ENCODE measurements at regions of chr14 and their contacts with region 1.

Region 1: GRCh38 chr14:72516936-72517700 is 376.8 kb downstream of the DPF3 start:
- DNase-seq: no peak
- CTCF ChIP-seq: peak; percentile 97

Region 2: DNA sequence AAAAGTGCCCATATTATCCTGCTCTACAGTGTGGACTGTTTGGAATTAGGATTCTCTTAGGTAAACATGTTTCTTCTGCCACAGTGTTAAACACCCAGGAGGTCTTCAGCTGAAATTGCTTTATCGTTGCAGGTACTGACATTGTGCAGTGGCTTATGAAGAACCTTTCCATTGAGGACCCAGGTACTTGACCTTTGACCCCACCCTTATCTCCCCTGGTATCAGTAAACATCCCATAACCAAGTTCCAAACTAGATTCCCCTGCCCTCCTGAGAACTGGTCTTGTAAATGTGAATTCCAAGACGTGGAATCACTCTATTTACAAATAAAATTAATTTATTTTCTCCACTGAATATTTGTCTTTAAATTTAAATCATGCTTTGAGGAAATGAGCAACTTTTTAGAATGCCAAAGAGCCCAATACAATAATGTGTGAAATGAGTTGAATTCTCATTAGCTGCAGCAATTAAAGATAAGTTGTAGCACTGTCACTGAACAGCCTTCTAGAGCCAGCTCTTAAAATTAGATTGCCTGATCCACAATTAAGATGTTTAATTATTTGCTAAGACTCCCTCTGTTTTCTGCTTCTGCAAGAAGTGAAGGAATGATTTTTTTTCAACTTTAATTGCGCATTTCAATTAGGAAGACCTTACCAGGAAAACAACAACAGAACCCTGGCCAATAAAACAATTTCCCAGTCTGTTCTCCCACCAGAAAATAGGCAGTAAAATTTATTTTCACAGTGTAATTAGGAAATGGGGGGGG is 62.5 kb before region 1 on chr14:
- CTCF ChIA-PET with region 1: interaction called, 11 read pairs
- POLR2A ChIA-PET with region 1: no interaction called
- DNase-seq: no peak
- CTCF ChIP-seq: no peak

Region 3: DNA sequence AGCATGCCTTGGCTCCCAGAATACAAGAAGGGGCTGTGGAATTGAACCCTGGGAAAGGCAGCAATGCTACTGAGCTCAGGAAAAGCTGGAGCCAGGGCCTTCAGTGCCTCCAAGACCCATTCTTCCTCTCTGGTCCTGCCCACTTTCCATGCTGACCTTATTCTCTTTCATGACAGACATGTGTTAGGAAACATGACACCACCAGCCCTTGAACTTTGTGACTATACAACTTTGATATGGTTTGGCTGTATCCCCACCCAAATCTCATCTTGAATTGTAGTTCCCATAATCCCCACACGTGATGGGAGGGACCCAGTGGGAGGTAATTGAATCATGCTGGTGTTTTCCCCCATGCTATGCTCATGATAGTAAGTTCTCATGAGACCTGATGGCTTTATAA is 31.4 kb before region 1 on chr14:
- CTCF ChIA-PET with region 1: interaction called, 12 read pairs
- POLR2A ChIA-PET with region 1: no interaction called
- DNase-seq: no peak
- CTCF ChIP-seq: no peak

Region 4: GRCh38 chr14:72503696-72504368 is 13.3 kb before region 1 on chr14:
- CTCF ChIA-PET with region 1: interaction called, 65 read pairs
- POLR2A ChIA-PET with region 1: no interaction called
- DNase-seq: no peak
- CTCF ChIP-seq: no peak

Region 5: DNA sequence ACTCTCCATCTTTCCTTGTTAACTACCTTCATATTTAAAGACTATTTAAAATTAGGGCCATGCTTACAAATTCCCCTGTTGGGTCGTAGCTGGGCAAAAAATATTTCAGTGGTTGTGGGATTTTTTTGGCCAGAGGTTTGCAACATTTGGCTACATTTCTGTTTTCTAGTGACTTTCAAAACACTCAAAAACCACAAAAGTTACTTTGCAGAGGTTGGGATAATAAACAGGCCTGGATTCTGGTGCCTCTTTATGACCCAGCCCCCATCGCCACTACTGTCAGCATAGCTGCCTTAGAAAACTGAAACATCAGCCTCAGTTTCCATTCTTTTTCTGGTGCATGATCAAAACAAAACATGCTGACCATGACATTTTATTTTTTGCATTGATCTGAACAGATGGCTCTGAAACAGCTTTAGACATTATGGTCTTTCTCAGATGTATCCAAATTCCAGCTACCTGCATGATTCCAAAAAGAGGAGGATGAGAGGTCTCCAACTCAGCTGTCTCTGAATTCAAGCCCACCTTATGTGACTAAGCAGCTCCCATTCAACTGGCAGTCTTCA is 371.6 kb after region 1 on chr14:
- CTCF ChIA-PET with region 1: interaction called, 21 read pairs
- POLR2A ChIA-PET with region 1: no interaction called
- DNase-seq: no peak
- CTCF ChIP-seq: no peak

Region 6: GRCh38 chr14:72904840-72905561 is 387.9 kb after region 1 on chr14:
- CTCF ChIA-PET with region 1: interaction called, 295 read pairs
- POLR2A ChIA-PET with region 1: interaction called, 3 read pairs
- DNase-seq: peak; percentile 59
- CTCF ChIP-seq: peak; percentile 89

Region 7: DNA sequence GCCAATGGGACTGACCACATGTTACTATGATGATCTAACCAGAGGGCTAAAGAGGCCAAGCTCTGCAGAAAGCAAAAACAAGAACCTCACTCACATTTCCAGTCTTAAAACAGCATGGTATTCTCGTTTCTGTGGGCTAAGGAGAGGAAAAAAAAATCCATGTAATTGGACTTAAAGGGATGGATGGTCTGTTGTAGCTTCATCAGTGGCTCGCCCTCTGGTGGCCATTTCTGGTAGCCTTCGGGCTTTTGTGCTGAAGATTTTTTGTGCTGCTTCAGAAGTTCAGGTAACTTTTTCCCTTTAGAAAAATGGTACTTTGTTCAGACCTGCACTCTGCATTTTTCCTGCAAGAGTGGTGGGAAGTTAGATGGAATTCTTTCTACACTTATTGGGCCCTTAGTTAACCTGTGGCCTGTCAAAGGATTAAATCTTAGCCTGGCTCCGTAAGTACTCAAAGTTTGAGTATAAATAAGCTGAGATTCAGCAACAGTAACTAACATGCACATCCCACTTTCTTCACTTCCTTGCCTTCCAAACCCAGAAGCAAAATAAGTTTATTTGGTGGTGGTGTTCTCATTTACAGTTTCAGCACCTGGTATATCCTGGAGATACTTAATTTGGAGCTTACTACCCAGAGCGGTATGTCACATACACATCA is 431.5 kb after region 1 on chr14:
- CTCF ChIA-PET with region 1: interaction called, 207 read pairs
- POLR2A ChIA-PET with region 1: no interaction called
- DNase-seq: peak; percentile 65
- CTCF ChIP-seq: peak; percentile 72